ENCODE measurements at regions of chr16 and their contacts with region 1.

Region 1: DNA sequence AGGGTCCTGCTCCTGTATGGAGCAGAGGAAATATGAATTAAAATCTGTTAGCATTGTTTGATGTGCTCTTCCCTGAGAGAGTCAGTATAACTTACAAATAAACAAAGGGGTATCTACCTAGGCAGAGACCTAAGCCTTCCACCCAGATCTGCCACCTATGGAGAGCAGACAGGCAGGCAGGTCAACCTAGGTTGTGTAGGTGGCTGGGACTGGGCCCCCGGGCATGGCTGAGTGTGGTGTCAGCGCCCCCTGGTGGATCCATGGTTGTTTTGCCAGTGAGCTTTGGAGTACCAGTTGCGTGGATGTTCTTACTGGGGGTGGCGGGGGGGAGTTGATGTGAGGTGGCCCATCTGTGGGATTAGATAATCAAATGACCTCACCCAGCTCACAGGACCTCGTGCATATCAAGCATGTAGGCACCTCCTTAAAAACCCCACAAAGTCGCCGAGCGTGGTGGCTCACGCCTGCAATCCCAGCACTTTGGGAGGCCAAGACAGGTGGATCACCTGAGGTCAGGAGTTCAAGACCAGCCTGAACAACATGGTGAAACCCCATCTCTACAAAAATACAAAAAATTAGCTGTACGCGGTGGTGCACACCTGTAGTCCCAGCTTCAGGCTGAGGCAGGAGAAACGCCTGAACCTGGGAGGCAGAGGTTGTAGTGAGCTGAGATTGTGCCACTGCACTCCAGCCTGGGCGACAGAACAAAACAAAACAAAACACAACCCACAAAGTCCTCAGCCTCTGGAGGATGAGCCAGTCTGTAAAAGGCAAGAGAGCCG is 17.6 kb downstream of the DUS2 start:
- DNase-seq: peak; percentile 59
- H3K4me3 ChIP-seq: no peak overlapping the region
- H3K27ac ChIP-seq: peak overlapping the region; percentile 2 to 35 (median 26)
- H3K4me1 ChIP-seq: peaks cover 0 to 6% (median 0%) of the 10 kb centered on the region in 3 donors
- H3K27me3 ChIP-seq: no peaks in the 10 kb centered on the region
- CTCF ChIP-seq: peak; percentile 80 to 94 (median 89)
- POLR2A ChIP-seq: no peak

Region 2: DNA sequence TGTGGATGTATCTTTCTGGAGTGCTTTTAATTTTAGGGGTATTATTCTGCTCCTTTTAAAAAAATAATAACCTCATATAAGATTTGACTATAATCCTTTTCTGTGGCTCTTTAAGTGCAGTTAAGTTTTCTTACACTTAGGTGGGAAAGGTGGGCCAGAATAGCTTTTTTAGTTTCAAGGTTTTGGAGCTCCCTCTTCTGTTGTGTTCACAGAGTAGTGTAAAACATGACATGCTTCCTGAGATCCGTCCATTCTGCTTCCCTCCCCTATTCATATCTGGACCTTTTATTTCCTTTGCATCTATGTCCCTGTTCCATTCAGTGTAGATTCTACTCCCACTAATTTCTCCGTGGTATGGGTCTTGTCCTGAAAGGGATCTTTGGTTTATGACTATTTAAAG is 701.2 kb before region 1 on chr16:
- intact Hi-C with region 1: no loop called
- DNase-seq: no peak
- H3K4me3 ChIP-seq: no peak overlapping the region
- H3K27ac ChIP-seq: no peak overlapping the region
- H3K4me1 ChIP-seq: peaks cover 0 to 5% (median 0%) of the 10 kb centered on the region in 3 donors
- H3K27me3 ChIP-seq: no peaks in the 10 kb centered on the region
- CTCF ChIP-seq: no peak
- POLR2A ChIP-seq: no peak

Region 3: DNA sequence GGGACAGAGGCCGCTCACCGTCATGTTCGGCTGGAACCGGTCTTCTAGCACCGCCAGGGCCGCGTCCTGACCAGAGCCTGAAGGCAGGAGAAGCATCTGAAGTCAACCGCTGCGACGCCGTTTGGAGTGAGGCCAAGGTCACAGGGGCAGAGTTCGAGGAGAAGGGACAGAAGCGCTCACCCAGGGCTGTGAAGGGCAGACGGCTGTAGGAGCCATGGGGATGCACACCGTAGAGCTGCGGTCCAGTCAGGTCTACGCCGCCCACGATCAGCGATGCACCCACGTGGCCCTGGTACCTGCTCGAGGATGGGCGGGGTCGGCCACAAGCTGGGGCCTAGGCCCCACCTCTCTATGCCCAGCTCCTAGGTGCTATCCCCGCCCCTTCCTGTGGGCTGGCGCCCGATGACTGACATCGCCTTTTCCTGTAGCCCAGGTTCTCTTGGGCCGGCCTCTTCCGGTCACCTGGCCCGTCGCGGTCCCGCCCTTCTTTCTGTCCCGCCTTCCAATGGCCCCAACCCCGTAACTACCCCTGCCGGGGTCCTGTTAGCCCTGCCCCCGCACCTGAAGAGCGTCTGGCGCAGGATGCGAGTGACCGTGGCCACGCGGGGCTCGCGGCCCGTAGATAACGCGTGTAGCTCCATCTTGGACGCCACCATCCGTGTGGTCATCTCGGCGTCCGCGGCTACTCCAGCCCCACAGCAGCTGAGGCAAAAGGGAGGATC is 105.1 kb before region 1 on chr16:
- intact Hi-C with region 1: no loop called
- DNase-seq: peak; percentile 81
- H3K4me3 ChIP-seq: peak overlapping the region; percentile 69 to 91 (median 86)
- H3K27ac ChIP-seq: peak overlapping the region; percentile 92 to 97 (median 96)
- H3K4me1 ChIP-seq: peaks cover 15 to 41% (median 22%) of the 10 kb centered on the region in 3 donors
- H3K27me3 ChIP-seq: no peaks in the 10 kb centered on the region
- CTCF ChIP-seq: peak in 2 of 6 experiments; percentile 13 to 18
- POLR2A ChIP-seq: peak in 2 of 4 donors; percentile 17 to 75

Region 4: DNA sequence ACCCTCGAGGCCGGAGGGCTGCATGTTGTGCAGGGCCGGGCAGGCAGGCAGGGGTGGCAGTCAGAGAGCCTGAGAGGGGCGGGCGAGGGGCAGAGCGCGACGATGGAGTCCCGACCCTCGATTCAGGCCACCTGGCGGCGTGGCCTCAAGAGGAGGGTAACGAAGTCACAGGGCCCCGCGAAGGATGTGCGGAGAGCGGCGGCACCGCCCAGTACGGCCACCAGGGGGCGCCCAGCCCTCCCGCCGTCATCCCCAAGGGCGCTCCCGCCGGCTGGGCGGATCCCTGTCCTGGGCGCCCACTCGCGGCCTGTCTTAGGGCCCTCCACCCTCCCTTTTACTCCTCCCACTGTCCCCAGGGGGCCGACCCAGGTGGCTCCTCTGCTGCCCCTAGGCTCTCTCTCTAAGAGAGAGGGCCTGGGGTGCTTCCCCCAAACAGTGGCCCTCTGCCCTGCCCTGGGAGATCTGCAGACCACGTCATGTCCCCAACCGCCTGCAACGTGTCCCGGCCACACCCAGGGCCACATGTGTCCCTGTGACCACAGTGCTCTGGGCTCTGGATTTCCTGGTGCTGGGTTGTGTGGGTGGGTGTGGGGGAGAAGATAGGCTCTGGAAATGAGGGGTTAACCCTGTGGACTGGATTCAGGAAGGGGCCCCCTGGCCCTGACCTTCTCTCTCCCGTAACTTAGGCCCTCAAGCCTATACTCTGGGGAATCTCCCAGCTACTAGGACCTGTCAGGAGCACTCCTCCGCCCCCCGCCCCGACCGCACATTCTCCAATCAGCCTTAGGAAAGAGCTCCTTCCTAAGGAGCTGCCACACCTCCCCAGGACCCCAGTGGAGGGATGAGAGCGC is 47.3 kb before region 1 on chr16:
- intact Hi-C with region 1: loop called (anchors 5 kb)
- DNase-seq: peak; percentile 61
- H3K4me3 ChIP-seq: peak overlapping the region; percentile 21 to 61 (median 43)
- H3K27ac ChIP-seq: peak overlapping the region; percentile 76 to 84 (median 82)
- H3K4me1 ChIP-seq: peaks cover 10 to 15% (median 14%) of the 10 kb centered on the region in 3 donors
- H3K27me3 ChIP-seq: no peaks in the 10 kb centered on the region
- CTCF ChIP-seq: peak; percentile 98 to 100 (median 99)
- POLR2A ChIP-seq: no peak

Region 5: GRCh38 chr16:68367030-68367429 is 326.3 kb after region 1 on chr16:
- intact Hi-C with region 1: no loop called
- DNase-seq: no peak
- H3K4me3 ChIP-seq: no peak overlapping the region
- H3K27ac ChIP-seq: no peak overlapping the region
- H3K4me1 ChIP-seq: peaks cover 0 to 28% (median 0%) of the 10 kb centered on the region in 3 donors
- H3K27me3 ChIP-seq: peaks cover 0 to 60% (median 3%) of the 10 kb centered on the region in 4 donors
- CTCF ChIP-seq: peak in 5 of 6 experiments; percentile 23 to 44 (median 31)
- POLR2A ChIP-seq: no peak

Measured in esophagus squamous epithelium (tissue), 5 donors.